Brain microvascular endothelial cell (primary cell): ENCODE measurements at regions of chr4 and their contacts with region 1.

Region 1: DNA sequence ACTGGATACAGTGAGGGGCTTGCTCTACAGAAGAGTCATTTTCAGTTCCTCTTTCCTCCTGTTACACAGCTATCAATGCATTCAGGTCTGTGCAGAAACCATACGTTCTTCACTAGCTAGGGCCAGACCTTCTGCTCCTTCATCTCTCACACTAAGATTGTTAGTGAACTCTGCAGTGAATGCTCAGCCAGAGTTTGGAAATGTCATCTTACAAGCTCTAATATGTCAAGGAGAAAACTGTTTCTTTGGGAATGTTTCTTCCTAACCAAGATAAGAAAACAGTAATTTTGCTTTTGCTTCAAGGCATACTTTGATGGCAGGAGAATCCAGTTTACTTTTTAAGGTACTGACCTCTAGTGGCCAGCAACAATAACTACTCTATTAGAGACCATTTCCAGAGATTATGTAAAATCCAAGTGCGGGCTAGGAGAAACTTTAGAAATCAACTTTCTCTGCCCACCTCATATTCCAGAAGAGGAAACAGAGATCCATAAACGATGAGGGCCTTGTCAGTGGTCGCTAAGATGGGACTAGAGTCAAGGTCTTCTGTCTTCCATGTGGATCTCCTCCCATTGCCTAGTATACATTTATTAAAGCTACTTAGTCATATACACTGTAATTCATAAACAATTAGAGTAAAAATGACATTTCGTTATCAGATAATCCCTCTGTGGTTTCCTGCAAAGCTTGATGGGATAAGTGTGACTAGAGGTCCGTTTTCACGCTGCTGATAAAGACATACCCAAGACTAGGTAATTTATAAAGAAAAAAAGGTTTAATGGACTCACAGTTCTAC is 12.1 kb upstream of the CC2D2A start:
- DNase-seq: peak; percentile 10
- H3K4me3 ChIP-seq: no peak overlapping the region
- H3K27ac ChIP-seq: no peak overlapping the region
- H3K27me3 ChIP-seq: no peaks in the 10 kb centered on the region
- CTCF ChIP-seq: peak; percentile 48

Region 2: GRCh38 chr4:14810568-14810967 is 647.0 kb before region 1 on chr4:
- in situ Hi-C with region 1: no loop called
- DNase-seq: no peak
- H3K4me3 ChIP-seq: no peak overlapping the region
- H3K27ac ChIP-seq: no peak overlapping the region
- H3K27me3 ChIP-seq: no peaks in the 10 kb centered on the region
- CTCF ChIP-seq: no peak

Region 3: GRCh38 chr4:15143551-15143950 is 314.1 kb before region 1 on chr4:
- in situ Hi-C with region 1: no loop called
- DNase-seq: no peak
- H3K4me3 ChIP-seq: no peak overlapping the region
- H3K27ac ChIP-seq: no peak overlapping the region
- H3K27me3 ChIP-seq: no peaks in the 10 kb centered on the region
- CTCF ChIP-seq: no peak

Region 4: GRCh38 chr4:15182600-15183220 is 274.9 kb before region 1 on chr4:
- in situ Hi-C with region 1: no loop called
- DNase-seq: peak; percentile 92
- H3K4me3 ChIP-seq: no peak overlapping the region
- H3K27ac ChIP-seq: peak overlapping the region; percentile 65
- H3K27me3 ChIP-seq: no peaks in the 10 kb centered on the region
- CTCF ChIP-seq: no peak

Region 5: GRCh38 chr4:15231265-15232091 is 226.1 kb before region 1 on chr4:
- in situ Hi-C with region 1: loop called (anchors 25 kb)
- DNase-seq: peak; percentile 91
- H3K4me3 ChIP-seq: no peak overlapping the region
- H3K27ac ChIP-seq: peak overlapping the region; percentile 97
- H3K27me3 ChIP-seq: no peaks in the 10 kb centered on the region
- CTCF ChIP-seq: peak; percentile 80